GM12878 (cell line): ENCODE measurements at regions of chr5 and their contacts with region 1.

Region 1: DNA sequence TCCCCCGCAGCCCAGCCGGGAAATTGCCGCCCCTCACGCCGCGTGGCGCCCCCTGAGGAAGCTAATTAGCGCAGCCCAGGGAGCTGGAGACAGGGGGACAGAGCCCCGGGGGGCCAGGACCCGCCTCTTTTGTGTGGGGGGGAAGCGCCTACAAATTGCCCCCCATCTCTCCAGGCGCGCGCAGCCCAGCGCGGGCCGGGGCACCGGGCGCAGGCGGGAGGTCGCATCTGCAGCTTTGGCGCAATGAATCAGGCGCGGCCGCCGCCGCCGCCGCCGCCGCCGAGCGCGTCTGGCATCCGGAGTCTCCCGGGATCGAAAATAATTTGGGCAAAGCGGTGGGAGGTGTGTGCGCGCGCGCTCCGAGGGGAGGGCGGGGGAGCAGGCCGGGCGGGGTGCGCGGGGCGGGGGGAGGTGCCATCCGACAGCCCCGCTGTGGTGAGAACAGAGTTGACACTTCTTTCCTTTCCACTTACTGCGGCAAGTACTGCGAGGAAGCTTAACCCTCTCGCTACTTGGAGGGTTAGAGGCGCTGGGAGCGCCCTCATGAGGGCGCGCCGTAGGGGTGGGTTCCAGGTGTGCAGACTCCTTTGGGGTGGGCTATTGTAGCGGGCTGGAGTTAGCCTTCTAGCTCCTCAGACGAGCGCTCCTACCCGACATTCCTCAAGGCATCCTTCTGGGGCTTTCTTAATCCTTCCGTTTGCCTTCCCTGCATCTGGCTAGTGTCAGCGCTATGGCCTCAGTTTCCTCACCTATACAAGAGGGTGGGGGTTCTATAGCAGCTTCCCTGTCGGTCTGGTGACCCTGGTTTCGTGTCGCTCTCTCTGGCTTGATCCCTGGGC is 63.1 kb downstream of the CXXC5 start:
- DNase-seq: no peak
- ATAC-seq: peak; percentile 72
- H3K4me3 ChIP-seq: peak overlapping the region; percentile 75
- H3K27ac ChIP-seq: no peak overlapping the region
- H3K4me1 ChIP-seq: peaks cover 21% of the 10 kb centered on the region
- H3K27me3 ChIP-seq: peaks cover 5 to 6% of the 10 kb centered on the region in 2 experiments; a peak in 3 of 4 replicates
- CTCF ChIP-seq: peak; percentile 4 to 38 (median 29); a peak in 3 of 6 replicates
- EP300 ChIP-seq: no peak
- POLR2A ChIP-seq: no peak
- RAD21 ChIP-seq: peak; percentile 39

Region 2: DNA sequence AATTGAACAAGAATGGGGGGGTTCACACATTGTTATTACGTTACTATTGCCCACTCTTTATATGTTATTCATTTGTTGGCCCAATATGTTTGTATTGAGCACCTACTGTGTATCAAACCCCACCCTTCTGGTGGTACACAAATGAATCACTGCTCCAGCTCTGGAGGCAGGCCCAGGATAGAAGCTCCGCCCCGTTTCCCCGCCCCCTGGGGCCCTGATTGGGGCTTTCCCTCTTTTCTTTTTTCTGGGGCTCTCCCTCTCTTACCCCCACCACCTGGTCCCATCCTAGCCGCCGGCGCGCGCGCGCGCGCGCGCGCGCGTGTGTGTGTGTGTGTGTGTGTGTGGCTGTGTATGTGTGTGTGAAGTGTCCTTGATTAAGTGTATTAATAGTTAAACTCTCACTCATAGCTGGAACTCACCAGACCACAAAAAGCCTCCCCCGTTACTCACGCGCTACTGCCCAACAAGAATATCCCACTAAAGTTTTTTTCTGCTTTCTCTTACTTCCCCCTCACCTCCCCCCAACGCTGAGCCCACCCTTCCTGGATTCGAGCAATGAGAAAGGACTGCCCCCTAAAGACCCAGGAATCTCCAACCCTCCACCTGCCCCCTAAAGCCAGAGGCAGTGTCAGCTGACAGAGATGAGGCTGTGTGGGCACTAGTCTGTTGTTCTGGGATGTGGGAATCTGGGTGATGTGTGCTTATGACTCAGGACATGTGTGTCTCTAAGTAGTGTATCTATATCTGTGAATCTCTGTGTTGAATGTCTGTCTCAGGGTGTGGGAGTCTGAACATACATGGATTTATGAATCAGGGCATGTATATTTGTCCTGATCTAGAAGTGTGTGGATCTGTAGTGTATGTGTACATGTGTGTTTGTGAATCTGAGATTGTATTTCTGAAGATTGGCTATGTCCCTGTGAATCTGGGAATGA is 59.2 kb before region 1 on chr5:
- CTCF ChIA-PET with region 1: no interaction called
- POLR2A ChIA-PET with region 1: interaction called, 6 read pairs
- RAD21 ChIA-PET with region 1: interaction called, 11 read pairs
- SMC1A ChIA-PET with region 1: interaction called, 3 read pairs
- in situ Hi-C with region 1: no loop called
- intact Hi-C with region 1: no loop called
- DNase-seq: peak; percentile 85
- ATAC-seq: peak; percentile 51
- H3K4me3 ChIP-seq: peak overlapping the region; percentile 96
- H3K27ac ChIP-seq: peak overlapping the region; percentile 91
- H3K4me1 ChIP-seq: peaks cover 59% of the 10 kb centered on the region
- H3K27me3 ChIP-seq: no peaks in the 10 kb centered on the region
- CTCF ChIP-seq: no peak
- EP300 ChIP-seq: peak; percentile 55 to 62; a peak in 2 of 4 replicates
- POLR2A ChIP-seq: no peak
- RAD21 ChIP-seq: no peak

Region 3: GRCh38 chr5:139670369-139671095 is 40.8 kb before region 1 on chr5:
- CTCF ChIA-PET with region 1: interaction called, 25 read pairs
- POLR2A ChIA-PET with region 1: interaction called, 4 read pairs
- RAD21 ChIA-PET with region 1: interaction called, 43 read pairs
- SMC1A ChIA-PET with region 1: interaction called, 14 read pairs
- in situ Hi-C with region 1: no loop called
- intact Hi-C with region 1: no loop called
- DNase-seq: peak; percentile 90
- ATAC-seq: peak; percentile 59
- H3K4me3 ChIP-seq: peak overlapping the region; percentile 84
- H3K27ac ChIP-seq: peak overlapping the region; percentile 99
- H3K4me1 ChIP-seq: peaks cover 54% of the 10 kb centered on the region
- H3K27me3 ChIP-seq: no peaks in the 10 kb centered on the region
- CTCF ChIP-seq: peak; percentile 52 to 65 (median 53)
- EP300 ChIP-seq: peak in 1 of 2 experiments; percentile 37; a peak in 1 of 4 replicates
- POLR2A ChIP-seq: no peak
- RAD21 ChIP-seq: peak; percentile 34

Region 4: GRCh38 chr5:139696894-139697658 is 14.2 kb before region 1 on chr5:
- CTCF ChIA-PET with region 1: interaction called, 52 read pairs
- POLR2A ChIA-PET with region 1: interaction called, 12 read pairs
- RAD21 ChIA-PET with region 1: interaction called, 48 read pairs
- SMC1A ChIA-PET with region 1: interaction called, 32 read pairs
- in situ Hi-C with region 1: no loop called
- intact Hi-C with region 1: no loop called
- DNase-seq: no peak
- ATAC-seq: peak; percentile 46
- H3K4me3 ChIP-seq: 0 out of 2 replicates have a peak overlapping the region, but pooled peaks have one; percentile 17
- H3K27ac ChIP-seq: no peak overlapping the region
- H3K4me1 ChIP-seq: peaks cover 12% of the 10 kb centered on the region
- H3K27me3 ChIP-seq: peaks cover 0 to 3% of the 10 kb centered on the region in 2 experiments; a peak in 2 of 4 replicates
- CTCF ChIP-seq: no peak
- EP300 ChIP-seq: no peak
- POLR2A ChIP-seq: no peak
- RAD21 ChIP-seq: no peak

Region 5: GRCh38 chr5:139740138-139740991 is 29.1 kb after region 1 on chr5:
- CTCF ChIA-PET with region 1: interaction called, 25 read pairs
- POLR2A ChIA-PET with region 1: interaction called, 15 read pairs
- RAD21 ChIA-PET with region 1: interaction called, 16 read pairs
- SMC1A ChIA-PET with region 1: interaction called, 49 read pairs
- in situ Hi-C with region 1: no loop called
- intact Hi-C with region 1: loop called (anchors 5 kb)
- DNase-seq: no peak
- ATAC-seq: peak; percentile 40
- H3K4me3 ChIP-seq: no peak overlapping the region
- H3K27ac ChIP-seq: no peak overlapping the region
- H3K4me1 ChIP-seq: peaks cover 25% of the 10 kb centered on the region
- H3K27me3 ChIP-seq: no peaks in the 10 kb centered on the region
- CTCF ChIP-seq: no peak
- EP300 ChIP-seq: no peak
- POLR2A ChIP-seq: no peak
- RAD21 ChIP-seq: no peak

Region 6: GRCh38 chr5:139882961-139883539 is 171.8 kb after region 1 on chr5:
- CTCF ChIA-PET with region 1: no interaction called
- POLR2A ChIA-PET with region 1: no interaction called
- RAD21 ChIA-PET with region 1: no interaction called
- SMC1A ChIA-PET with region 1: no interaction called
- in situ Hi-C with region 1: no loop called
- intact Hi-C with region 1: no loop called
- DNase-seq: no peak
- ATAC-seq: no peak
- H3K4me3 ChIP-seq: no peak overlapping the region
- H3K27ac ChIP-seq: no peak overlapping the region
- H3K4me1 ChIP-seq: peaks cover 4% of the 10 kb centered on the region; the same call in 1 of the 2 replicates
- H3K27me3 ChIP-seq: no peaks in the 10 kb centered on the region
- CTCF ChIP-seq: no peak
- EP300 ChIP-seq: no peak
- POLR2A ChIP-seq: no peak
- RAD21 ChIP-seq: no peak